PC-3 (cell line): ENCODE measurements at regions of chr2 and their contacts with region 1.

Region 1: DNA sequence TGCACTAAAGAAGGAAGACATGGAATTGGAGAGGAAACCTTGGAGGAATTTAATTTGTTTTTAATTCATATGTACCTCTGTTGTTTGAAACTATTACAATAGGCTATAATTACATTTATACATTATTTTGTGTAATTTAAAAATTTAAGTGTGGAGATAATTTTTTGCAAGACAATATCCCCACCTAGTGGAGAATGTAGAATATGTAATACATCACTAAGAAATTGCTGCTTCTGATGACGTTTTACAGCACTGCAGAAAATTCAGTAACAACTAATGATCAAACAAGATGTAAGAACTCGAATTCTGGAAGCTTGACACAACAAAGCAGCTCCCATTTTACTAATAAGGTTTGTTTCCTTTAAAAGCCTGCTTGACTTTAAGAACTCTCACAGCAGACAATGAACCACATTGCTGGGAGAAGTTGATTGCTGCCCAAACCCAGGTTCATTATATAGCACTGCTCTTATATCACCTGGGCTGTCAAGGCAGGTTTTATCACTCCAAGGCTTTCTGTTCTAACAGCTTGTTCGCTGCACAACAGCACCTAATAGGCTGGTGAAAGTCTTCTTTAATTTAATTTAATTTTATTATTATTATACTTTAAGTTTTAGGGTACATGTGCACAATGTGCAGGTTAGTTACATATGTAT is 53.4 kb downstream of the THADA start:
- DNase-seq: peak; percentile 73
- ATAC-seq: peak; percentile 56
- H3K4me3 ChIP-seq: no peak overlapping the region
- H3K27ac ChIP-seq: no peak overlapping the region
- H3K4me1 ChIP-seq: peaks cover 25% of the 10 kb centered on the region
- H3K27me3 ChIP-seq: no peaks in the 10 kb centered on the region
- CTCF ChIP-seq: peak; percentile 70

Region 2: GRCh38 chr2:42944779-42945415 is 597.5 kb before region 1 on chr2:
- CTCF ChIA-PET with region 1: no interaction called
- POLR2A ChIA-PET with region 1: no interaction called
- intact Hi-C with region 1: loop called (anchors 2 kb)
- DNase-seq: peak; percentile 66
- ATAC-seq: peak; percentile 64
- H3K4me3 ChIP-seq: no peak overlapping the region
- H3K27ac ChIP-seq: no peak overlapping the region
- H3K4me1 ChIP-seq: no peaks in the 10 kb centered on the region
- H3K27me3 ChIP-seq: no peaks in the 10 kb centered on the region
- CTCF ChIP-seq: no peak

Region 3: DNA sequence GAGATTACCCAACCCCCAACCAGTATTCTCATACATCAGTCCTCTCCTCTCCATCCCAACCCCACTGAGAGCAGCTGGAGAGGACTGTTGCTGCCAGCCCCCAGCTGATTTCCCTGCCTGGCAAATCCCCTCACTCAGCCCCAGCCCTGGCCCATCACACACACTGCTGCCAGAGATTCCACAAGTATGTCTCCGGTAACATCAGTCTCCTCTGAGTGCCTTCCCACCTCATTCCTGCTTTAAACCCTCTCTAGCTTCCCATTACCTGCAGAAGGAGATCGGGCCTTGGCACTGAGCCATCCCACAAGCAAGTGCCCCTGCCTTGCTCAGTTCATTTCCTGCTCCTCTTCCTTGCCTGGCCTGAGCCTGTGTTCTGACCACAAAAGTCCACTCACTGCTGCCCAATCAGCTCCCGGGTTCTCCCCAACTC is 265.4 kb before region 1 on chr2:
- CTCF ChIA-PET with region 1: no interaction called
- POLR2A ChIA-PET with region 1: no interaction called
- intact Hi-C with region 1: loop called (anchors 1 kb)
- DNase-seq: peak; percentile 61
- ATAC-seq: peak; percentile 19; the same call in 1 of the 2 replicates
- H3K4me3 ChIP-seq: no peak overlapping the region
- H3K27ac ChIP-seq: no peak overlapping the region
- H3K4me1 ChIP-seq: peaks cover 19% of the 10 kb centered on the region
- H3K27me3 ChIP-seq: no peaks in the 10 kb centered on the region
- CTCF ChIP-seq: no peak